Dendritic cell treated with granulocyte-macrophage colony-stimulating factor and Interleukin-4, amounts not matched to agents 40 ng/mL and 50 ng/mL, for 4 days (primary cell): ENCODE measurements at regions of chr4 and their contacts with region 1.

Region 1: DNA sequence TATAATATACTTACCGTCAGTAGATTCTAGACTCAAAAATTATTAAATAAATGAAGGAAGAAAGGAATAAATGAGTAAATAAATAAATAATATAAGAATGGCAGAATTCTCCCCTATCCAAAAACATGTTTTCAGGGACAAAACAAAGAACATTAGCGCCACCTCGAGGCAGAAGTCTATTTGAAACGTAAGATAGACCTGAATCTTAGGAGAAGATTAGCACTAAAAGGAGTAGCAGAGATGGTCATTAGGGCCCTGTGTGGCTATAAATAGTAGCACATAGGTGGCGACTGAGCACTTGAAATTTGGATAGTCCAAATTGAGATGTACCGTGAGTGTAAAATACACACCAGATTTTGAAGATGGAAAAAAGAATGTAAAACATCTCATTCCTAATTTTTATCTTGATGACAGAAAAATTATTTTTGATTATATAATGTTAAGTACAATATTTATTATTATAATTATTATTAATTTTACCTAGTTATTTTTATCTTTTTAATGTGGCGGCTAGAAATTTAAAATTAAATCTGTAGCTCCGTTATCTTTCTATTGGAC is 24.3 kb upstream of the SRD5A3 start:
- H3K4me3 Mint-ChIP-seq: no peak overlapping the region
- H3K27ac Mint-ChIP-seq: no peak overlapping the region
- H3K4me1 Mint-ChIP-seq: peaks cover 6% of the 10 kb centered on the region
- H3K27me3 Mint-ChIP-seq: peaks cover 11% of the 10 kb centered on the region

Region 2: DNA sequence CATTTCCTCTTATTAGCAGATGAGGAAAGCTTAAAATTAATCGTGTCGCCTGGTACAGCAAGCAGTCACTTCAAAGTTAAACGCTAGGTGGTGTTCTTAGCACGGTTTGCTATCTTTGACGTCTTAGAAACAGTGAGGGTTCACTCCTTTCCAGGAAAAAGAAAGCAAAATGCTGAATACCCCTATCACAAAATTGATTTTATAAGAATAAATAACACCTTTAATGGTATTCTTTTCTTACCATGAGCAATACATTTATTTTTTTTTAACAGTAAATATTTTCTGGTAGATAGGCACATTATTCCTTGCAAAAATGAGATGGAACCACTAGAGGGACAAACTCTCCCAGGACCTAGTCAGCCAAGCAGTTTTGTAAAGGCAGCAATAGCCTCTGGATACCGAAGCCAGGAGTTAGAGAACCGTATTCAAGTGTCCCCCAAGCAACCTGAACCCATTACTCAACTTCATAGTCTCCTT is 350.3 kb before region 1 on chr4:
- intact Hi-C with region 1: loop called (anchors 1 kb)
- H3K4me3 Mint-ChIP-seq: no peak overlapping the region
- H3K27ac Mint-ChIP-seq: no peak overlapping the region
- H3K4me1 Mint-ChIP-seq: no peaks in the 10 kb centered on the region
- H3K27me3 Mint-ChIP-seq: peaks cover 1% of the 10 kb centered on the region

Region 3: DNA sequence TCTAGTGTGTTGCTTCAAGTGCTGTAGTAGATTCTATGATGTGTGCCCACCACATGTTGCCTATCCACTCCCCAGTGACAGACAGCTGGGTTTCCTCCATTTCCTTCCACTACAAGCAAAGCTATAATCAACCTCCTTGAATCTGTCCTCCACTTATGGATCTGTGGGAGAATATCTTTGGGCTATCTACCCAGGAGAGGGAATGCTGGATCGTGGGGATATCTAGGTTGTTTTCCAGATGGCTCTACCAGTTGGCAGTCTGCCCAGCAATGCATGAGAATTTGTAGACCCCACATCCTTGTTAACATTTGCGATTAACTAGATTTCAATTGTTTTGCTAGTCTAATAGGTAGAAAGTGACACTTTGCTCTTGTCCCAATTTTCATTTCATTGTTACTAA is 304.0 kb after region 1 on chr4:
- intact Hi-C with region 1: no loop called
- H3K4me3 Mint-ChIP-seq: no peak overlapping the region
- H3K27ac Mint-ChIP-seq: no peak overlapping the region
- H3K4me1 Mint-ChIP-seq: no peaks in the 10 kb centered on the region
- H3K27me3 Mint-ChIP-seq: peaks cover 7% of the 10 kb centered on the region